Dorsolateral prefrontal cortex (tissue), 120 donors: ENCODE measurements at regions of chr22 and their contacts with region 1.

Region 1: DNA sequence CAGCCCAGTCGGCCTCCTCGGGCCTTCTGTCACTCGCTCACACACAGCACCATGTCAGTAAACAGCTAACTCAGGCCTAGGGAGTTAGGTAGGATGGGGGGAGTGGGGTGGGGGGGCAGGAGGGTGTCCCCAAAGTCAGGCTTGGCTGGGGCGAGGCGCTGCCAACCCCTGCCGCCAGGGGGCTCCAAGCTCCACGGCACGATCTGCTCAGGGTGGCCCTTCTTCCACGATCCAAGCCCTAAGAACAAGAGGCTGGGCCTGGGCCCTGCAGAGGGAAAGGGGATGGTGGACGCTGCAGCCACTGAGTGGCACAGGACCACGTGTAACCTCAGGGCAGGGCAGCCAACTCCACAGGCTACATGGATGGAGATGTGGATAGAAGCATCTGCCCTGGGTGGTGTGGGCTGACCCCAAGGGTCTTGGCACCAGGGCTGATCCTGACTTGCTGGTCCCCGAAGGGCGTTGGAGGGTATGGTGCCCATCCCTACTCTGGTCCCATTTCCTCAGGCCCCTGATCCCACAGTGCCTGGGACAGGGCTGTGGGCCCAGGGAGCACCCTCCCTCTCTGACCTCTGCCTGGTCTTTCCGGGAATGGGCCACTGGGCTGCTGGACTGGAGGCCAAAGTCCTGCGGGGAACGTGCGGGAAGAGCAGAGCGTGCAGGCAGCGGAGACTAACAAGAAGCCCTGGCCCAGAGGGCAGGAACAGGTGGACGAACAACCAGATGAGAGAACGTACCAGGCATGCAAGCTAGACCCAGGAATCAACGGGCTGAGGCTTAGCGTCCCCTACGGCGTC is 29.1 kb upstream of the TXNRD2 start:
- DNase-seq: peak in 9 of 10 donors; percentile 66 to 83 (median 68)
- H3K4me3 ChIP-seq: no peak overlapping the region
- H3K27ac ChIP-seq: peak overlapping the region in 53 of 59 donors; percentile 1 to 86 (median 56)
- H3K27me3 ChIP-seq: no peaks in the 10 kb centered on the region
- CTCF ChIP-seq: peak; percentile 76 to 99 (median 96)

Region 2: GRCh38 chr22:19986410-19987341 is 16.0 kb after region 1 on chr22:
- intact Hi-C with region 1: no loop called
- DNase-seq: peak in 7 of 10 donors; percentile 56 to 82 (median 67)
- H3K4me3 ChIP-seq: peak overlapping the region; percentile 47 to 90 (median 75)
- H3K27ac ChIP-seq: peak overlapping the region in 52 of 59 donors; percentile 30 to 90 (median 70)
- H3K27me3 ChIP-seq: no peaks in the 10 kb centered on the region
- CTCF ChIP-seq: no peak

Region 3: DNA sequence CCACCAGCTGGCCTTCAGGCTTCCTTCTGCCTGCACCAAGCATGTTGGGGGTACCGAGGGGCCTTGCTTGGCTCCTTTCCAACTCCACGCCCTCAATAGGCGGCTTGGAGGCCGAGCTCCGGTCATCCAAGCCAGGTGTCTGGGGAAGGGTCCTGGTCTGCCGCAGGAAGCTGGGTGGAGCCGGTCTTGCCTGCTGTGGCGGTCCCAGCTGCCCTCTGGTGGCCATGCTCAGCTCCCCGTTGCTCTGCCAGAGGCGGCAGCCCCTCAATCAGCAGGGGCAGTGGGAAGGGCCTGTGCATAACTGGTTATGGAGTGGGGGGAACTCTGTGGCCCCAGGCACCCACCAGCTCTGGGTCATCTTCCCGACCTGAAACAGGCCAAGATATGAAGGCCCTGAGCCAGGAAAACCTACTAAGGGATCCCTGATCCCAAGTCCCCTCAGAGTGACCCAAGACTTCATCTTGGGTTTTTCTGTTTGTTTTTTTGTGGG is 42.8 kb after region 1 on chr22:
- intact Hi-C with region 1: loop called (anchors 2 kb)
- DNase-seq: peak in 9 of 10 donors; percentile 45 to 79 (median 68)
- H3K4me3 ChIP-seq: peak overlapping the region in 2 of 59 donors; percentile 13 to 27
- H3K27ac ChIP-seq: peak overlapping the region in 5 of 59 donors; percentile 14 to 83 (median 31)
- H3K27me3 ChIP-seq: no peaks in the 10 kb centered on the region
- CTCF ChIP-seq: peak; percentile 46 to 90 (median 80)

Region 4: GRCh38 chr22:20037419-20037818 is 66.7 kb after region 1 on chr22:
- intact Hi-C with region 1: loop called (anchors 1 to 2 kb)
- DNase-seq: no peak
- H3K4me3 ChIP-seq: no peak overlapping the region
- H3K27ac ChIP-seq: peak overlapping the region in 51 of 59 donors; percentile 47 to 95 (median 80)
- H3K27me3 ChIP-seq: no peaks in the 10 kb centered on the region
- CTCF ChIP-seq: no peak

Region 5: DNA sequence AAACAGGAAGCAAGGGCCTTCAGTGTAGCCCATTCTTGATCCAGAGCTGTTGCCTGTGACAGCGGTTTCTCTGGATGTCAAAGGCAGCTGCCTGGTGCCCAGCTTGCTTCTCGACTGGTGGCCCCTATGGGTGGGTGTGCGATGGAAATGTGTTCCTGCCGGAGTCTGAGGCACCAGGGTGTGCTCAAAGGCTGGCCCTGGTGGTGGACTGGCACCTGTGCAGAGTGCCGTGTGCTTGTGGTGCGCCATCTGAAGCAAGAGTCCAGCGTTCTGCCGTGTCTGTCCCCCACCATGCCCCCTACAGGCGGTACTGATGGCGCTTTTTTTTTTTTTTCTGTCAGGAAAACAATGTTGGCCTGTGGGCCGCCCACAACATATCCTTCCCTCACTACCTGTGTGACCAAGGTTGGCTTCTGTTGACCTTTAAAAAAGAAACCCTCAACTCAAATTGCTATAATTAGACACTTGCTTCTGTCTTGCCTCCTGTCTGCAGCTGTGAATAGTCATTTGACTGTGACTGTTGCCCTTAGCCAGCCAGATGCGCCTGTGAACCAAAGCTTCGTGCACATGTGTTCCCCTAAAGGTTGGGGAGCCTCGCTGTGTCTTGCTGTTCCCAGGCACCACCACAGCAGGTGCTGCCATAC is 140.5 kb after region 1 on chr22:
- intact Hi-C with region 1: loop called in 1 of 2 experiments (anchors 5 kb)
- DNase-seq: peak in 2 of 10 donors; percentile 26 to 41
- H3K4me3 ChIP-seq: no peak overlapping the region
- H3K27ac ChIP-seq: peak overlapping the region in 35 of 59 donors; percentile 1 to 79 (median 53)
- H3K27me3 ChIP-seq: no peaks in the 10 kb centered on the region
- CTCF ChIP-seq: peak in 38 of 56 donors; percentile 8 to 55 (median 32)

Region 6: DNA sequence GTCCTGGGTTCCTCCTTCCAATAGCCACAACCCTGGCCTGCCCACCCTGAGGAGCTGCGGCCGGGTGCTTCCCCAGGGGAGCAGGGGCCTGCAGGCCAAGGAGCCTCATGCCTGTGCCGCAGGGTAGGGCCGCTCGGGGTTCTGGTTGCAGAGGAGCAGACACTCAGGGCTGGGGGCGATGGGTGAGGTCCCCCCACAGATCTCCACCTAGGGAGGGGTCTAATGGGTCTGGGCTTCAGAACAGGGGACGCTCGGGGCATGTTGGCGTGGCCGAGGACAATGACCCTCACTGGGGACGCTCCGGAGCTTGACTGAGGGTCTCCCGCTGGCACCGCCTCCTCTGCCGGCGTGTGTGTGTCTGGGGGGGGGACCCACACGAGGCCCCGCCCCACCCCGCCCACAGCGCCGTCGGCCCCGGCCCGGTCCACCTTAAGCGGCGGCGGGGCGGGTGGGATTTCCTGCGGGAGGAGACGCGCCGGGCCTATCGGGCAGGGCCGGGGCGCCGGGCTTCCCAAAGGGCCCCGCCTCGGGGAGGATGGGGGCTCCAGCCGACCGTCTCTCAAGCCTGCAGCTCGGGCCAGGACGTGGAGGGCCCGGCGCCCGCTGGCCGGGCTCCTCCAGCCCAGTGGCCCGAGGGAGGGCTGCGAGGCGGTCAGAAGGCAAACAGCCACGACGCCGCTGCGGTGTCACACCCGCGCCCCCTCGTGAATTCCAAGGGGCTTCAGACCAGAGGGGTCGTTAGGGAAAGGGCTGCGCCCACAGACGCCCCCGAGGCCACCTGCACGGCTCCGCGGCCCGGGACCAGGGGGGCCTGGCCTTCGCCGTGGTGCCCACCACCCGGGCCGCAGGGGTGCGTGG is 160.3 kb after region 1 on chr22:
- intact Hi-C with region 1: loop called in 1 of 2 experiments (anchors 5 kb)
- DNase-seq: peak; percentile 75 to 93 (median 88)
- H3K4me3 ChIP-seq: peak overlapping the region; percentile 56 to 100 (median 92)
- H3K27ac ChIP-seq: peak overlapping the region; percentile 58 to 99 (median 96)
- H3K27me3 ChIP-seq: no peaks in the 10 kb centered on the region
- CTCF ChIP-seq: peak in 1 of 56 donors; percentile 12

Region 7: DNA sequence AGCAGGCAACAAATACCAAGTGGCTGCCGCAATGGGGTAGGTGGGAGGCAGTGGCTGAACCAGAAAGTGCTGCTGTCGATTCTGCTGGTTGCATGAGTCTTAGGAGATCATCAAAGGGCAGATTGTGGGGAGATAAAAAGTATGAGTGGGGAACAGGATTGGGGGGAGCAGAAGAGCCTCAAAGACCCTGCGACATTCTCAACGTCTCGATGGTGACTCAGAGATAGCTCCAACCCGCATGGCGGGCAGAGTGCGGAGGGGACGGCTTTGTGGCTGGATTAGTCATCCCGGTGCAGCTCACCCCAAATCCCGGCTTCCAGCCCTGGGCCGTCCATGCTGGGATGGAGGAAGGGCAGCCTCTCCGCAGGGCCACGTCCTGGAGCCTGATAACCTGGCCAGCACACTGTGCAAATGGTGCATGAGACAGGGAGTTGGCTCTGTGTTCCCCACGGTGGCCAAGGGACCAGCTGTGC is 309.0 kb after region 1 on chr22:
- intact Hi-C with region 1: loop called in 1 of 2 experiments (anchors 10 kb)
- DNase-seq: no peak
- H3K4me3 ChIP-seq: no peak overlapping the region
- H3K27ac ChIP-seq: peak overlapping the region in 1 of 59 donors; percentile 48
- H3K27me3 ChIP-seq: no peaks in the 10 kb centered on the region
- CTCF ChIP-seq: no peak